ENCODE measurements at regions of chr1 and their contacts with region 1.

Region 1: GRCh38 chr1:237864338-237865244 is 26.1 kb downstream of the ZP4 start:
- DNase-seq: peak; percentile 81
- H3K4me3 ChIP-seq: peak overlapping the region; percentile 31 to 60
- H3K27ac ChIP-seq: peak overlapping the region in 1 of 2 experiments; percentile 74; a peak in 2 of 4 replicates
- H3K4me1 ChIP-seq: peaks cover 0 to 7% of the 10 kb centered on the region in 2 experiments; a peak in 2 of 4 replicates
- H3K27me3 ChIP-seq: no peaks in the 10 kb centered on the region
- CTCF ChIP-seq: peak; percentile 98
- EP300 ChIP-seq: peak in 1 of 2 experiments; percentile 49; a peak in 1 of 4 replicates
- RAD21 ChIP-seq: peak; percentile 94

Region 2: GRCh38 chr1:237811633-237812032 is 53.0 kb before region 1 on chr1:
- CTCF ChIA-PET with region 1: interaction called, 18 read pairs
- POLR2A ChIA-PET with region 1: no interaction called
- DNase-seq: no peak
- H3K4me3 ChIP-seq: no peak overlapping the region
- H3K27ac ChIP-seq: no peak overlapping the region
- H3K4me1 ChIP-seq: no peaks in the 10 kb centered on the region; a peak in 1 of 4 replicates
- H3K27me3 ChIP-seq: no peaks in the 10 kb centered on the region
- CTCF ChIP-seq: no peak
- EP300 ChIP-seq: no peak
- RAD21 ChIP-seq: no peak

Region 3: GRCh38 chr1:237834461-237834860 is 30.1 kb before region 1 on chr1:
- CTCF ChIA-PET with region 1: interaction called, 11 read pairs
- POLR2A ChIA-PET with region 1: no interaction called
- DNase-seq: no peak
- H3K4me3 ChIP-seq: no peak overlapping the region
- H3K27ac ChIP-seq: peak overlapping the region in 1 of 2 experiments; percentile 22; a peak in 1 of 4 replicates
- H3K4me1 ChIP-seq: peaks cover 0 to 12% of the 10 kb centered on the region in 2 experiments; a peak in 2 of 4 replicates
- H3K27me3 ChIP-seq: no peaks in the 10 kb centered on the region
- CTCF ChIP-seq: no peak
- EP300 ChIP-seq: no peak
- RAD21 ChIP-seq: no peak

Region 4: GRCh38 chr1:237851210-237851845 is 13.3 kb before region 1 on chr1:
- CTCF ChIA-PET with region 1: interaction called, 126 read pairs
- POLR2A ChIA-PET with region 1: no interaction called
- DNase-seq: peak; percentile 50
- H3K4me3 ChIP-seq: no peak overlapping the region; a peak in 1 of 4 replicates
- H3K27ac ChIP-seq: no peak overlapping the region
- H3K4me1 ChIP-seq: no peaks in the 10 kb centered on the region; a peak in 2 of 4 replicates
- H3K27me3 ChIP-seq: no peaks in the 10 kb centered on the region
- CTCF ChIP-seq: peak; percentile 82
- EP300 ChIP-seq: no peak
- RAD21 ChIP-seq: peak; percentile 80

Region 5: GRCh38 chr1:237884237-237884636 is 19.6 kb after region 1 on chr1:
- CTCF ChIA-PET with region 1: interaction called, 20 read pairs
- POLR2A ChIA-PET with region 1: no interaction called
- DNase-seq: no peak
- H3K4me3 ChIP-seq: no peak overlapping the region
- H3K27ac ChIP-seq: no peak overlapping the region
- H3K4me1 ChIP-seq: 0 out of 4 replicates have a peak, but pooled peaks cover 0 to 4% of the 10 kb centered on the region in 2 experiments
- H3K27me3 ChIP-seq: no peaks in the 10 kb centered on the region
- CTCF ChIP-seq: no peak
- EP300 ChIP-seq: no peak
- RAD21 ChIP-seq: no peak

Region 6: GRCh38 chr1:238951809-238952208 is 1087.2 kb after region 1 on chr1:
- CTCF ChIA-PET with region 1: interaction called, 40 read pairs
- POLR2A ChIA-PET with region 1: no interaction called
- DNase-seq: peak; percentile 20
- H3K4me3 ChIP-seq: no peak overlapping the region
- H3K27ac ChIP-seq: no peak overlapping the region
- H3K4me1 ChIP-seq: peaks cover 0 to 10% of the 10 kb centered on the region in 2 experiments; a peak in 2 of 4 replicates
- H3K27me3 ChIP-seq: no peaks in the 10 kb centered on the region
- CTCF ChIP-seq: peak; percentile 72
- EP300 ChIP-seq: no peak
- RAD21 ChIP-seq: peak; percentile 84